ENCODE measurements at regions of chr20 and their contacts with region 1.

Region 1: DNA sequence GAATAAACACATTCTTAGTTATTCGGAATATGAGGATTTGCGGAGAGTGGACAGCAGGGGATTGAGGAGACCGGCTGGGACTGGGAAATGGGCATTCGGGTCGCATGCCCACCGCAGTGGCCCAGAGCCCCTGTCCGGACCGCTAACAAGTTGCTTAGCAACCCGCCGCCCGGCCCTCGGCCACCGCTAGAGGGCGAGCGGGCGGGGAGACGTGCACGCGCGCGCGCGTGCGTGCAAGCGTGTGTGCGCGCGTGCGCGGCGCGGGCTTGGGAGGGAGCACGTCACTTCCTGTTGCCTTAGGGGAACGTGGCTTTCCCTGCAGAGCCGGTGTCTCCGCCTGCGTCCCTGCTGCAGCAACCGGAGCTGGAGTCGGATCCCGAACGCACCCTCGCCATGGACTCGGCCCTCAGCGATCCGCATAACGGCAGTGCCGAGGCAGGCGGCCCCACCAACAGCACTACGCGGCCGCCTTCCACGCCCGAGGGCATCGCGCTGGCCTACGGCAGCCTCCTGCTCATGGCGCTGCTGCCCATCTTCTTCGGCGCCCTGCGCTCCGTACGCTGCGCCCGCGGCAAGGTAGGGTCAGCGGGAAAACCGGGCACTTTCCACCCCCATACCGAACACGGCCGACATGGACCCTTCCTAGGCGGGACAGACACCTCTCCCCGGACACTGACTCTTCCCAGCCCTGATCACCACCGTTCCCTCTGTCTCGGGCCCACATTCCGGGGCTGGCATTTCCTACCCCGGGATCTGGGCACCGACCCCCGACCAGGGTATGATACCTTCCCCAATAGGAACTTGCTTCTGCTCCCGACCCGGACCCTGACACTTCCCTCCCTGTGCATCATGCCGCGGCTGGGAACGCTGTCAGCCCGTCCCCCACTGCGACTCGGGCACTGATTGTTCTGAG is at the start of gene HM13:
- DNase-seq: peak; percentile 76 to 90
- H3K4me3 ChIP-seq: peak within 1 kb of the TSS; percentile 95
- H3K27ac ChIP-seq: peak within 1 kb of the TSS; percentile 68
- H3K4me1 ChIP-seq: peaks cover 28% of the 10 kb centered on the region
- H3K27me3 ChIP-seq: no peaks in the 10 kb centered on the region
- CTCF ChIP-seq: peak; percentile 94
- total RNA-seq, gene HM13: 220 and 272 TPM in 2 replicates

Region 2: DNA sequence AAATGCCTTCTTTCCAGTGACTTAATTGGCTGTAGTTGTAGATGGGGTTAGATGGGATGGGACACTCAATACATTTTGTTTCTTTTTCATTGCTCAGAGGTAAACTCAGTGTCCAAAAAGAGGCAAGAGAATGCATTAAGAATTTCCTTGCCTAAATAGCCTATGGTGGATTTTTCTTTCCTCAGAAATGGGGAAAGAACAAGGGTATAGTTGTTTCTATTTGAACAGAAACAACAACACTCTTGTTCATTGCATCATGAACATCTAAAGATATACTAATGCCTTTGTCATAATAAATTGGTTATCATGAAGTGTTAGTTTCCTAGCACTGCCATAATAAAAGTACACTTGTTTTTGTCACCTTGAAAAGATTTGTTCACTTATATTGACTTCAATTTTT is 88.6 kb before region 1 on chr20:
- CTCF ChIA-PET with region 1: no interaction called
- POLR2A ChIA-PET with region 1: no interaction called
- intact Hi-C with region 1: no loop called
- DNase-seq: no peak
- H3K4me3 ChIP-seq: no peak overlapping the region
- H3K27ac ChIP-seq: no peak overlapping the region
- H3K4me1 ChIP-seq: no peaks in the 10 kb centered on the region
- H3K27me3 ChIP-seq: peaks cover 10% of the 10 kb centered on the region; the same call in 1 of the 2 replicates
- CTCF ChIP-seq: no peak

Region 3: DNA sequence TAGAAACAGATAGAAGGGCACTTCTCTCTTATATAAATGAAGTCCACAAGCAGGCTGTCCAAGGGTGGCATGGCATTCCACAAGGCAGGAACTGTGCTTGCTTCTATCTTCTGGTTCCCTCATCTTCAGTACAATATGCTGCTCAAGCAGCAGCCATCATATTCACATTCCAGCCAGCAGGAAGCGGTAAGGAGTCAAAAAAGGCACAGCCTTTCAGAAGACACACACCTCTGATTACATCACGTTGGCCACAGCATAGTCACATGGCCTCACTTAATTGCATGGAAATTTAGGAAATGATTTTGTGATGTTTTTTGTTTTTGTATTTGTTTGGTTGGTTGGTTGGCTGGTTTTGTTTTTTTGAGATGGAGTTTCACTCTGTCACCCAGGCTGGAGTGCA is 20.3 kb before region 1 on chr20:
- CTCF ChIA-PET with region 1: interaction called, 19 read pairs
- POLR2A ChIA-PET with region 1: no interaction called
- intact Hi-C with region 1: no loop called
- DNase-seq: peak; percentile 45 to 62
- H3K4me3 ChIP-seq: no peak overlapping the region
- H3K27ac ChIP-seq: no peak overlapping the region
- H3K4me1 ChIP-seq: no peaks in the 10 kb centered on the region
- H3K27me3 ChIP-seq: no peaks in the 10 kb centered on the region
- CTCF ChIP-seq: peak; percentile 74

Region 4: GRCh38 chr20:31566658-31567379 is 52.4 kb after region 1 on chr20:
- CTCF ChIA-PET with region 1: interaction called, 5 read pairs
- POLR2A ChIA-PET with region 1: no interaction called
- intact Hi-C with region 1: loop called (anchors 2 kb)
- DNase-seq: peak; percentile 95 to 99
- H3K4me3 ChIP-seq: peak overlapping the region; percentile 47; the same call in 1 of the 2 replicates
- H3K27ac ChIP-seq: peak overlapping the region; percentile 99
- H3K4me1 ChIP-seq: peaks cover 83% of the 10 kb centered on the region
- H3K27me3 ChIP-seq: no peaks in the 10 kb centered on the region
- CTCF ChIP-seq: 0 out of 2 replicates have a peak, but pooled peaks have one; percentile 47

Measured in PC-9 (cell line).